CD8-positive, alpha-beta T cell (primary cell): ENCODE measurements at regions of chr11 and their contacts with region 1.

Region 1: GRCh38 chr11:104968355-104968855 is at the start of gene CASP4:
- DNase-seq: peak in 2 of 9 experiments; percentile 60 to 76
- ATAC-seq: peak; percentile 71
- H3K4me3 ChIP-seq: peak within 1 kb of the TSS; percentile 64 to 66
- H3K4me3 Mint-ChIP-seq: peak within 1 kb of the TSS; percentile 96
- H3K27ac ChIP-seq: peak within 1 kb of the TSS; percentile 71 to 83
- H3K27ac Mint-ChIP-seq: peak within 1 kb of the TSS; percentile 97
- H3K4me1 ChIP-seq: peaks cover 32% of the 10 kb centered on the region
- H3K4me1 Mint-ChIP-seq: peaks cover 40% of the 10 kb centered on the region
- H3K27me3 ChIP-seq: no peaks in the 10 kb centered on the region
- H3K27me3 Mint-ChIP-seq: no peaks in the 10 kb centered on the region
- CTCF ChIP-seq: no peak
- total RNA-seq, gene CASP4: 63.5 to 75.5 TPM

Region 2: DNA sequence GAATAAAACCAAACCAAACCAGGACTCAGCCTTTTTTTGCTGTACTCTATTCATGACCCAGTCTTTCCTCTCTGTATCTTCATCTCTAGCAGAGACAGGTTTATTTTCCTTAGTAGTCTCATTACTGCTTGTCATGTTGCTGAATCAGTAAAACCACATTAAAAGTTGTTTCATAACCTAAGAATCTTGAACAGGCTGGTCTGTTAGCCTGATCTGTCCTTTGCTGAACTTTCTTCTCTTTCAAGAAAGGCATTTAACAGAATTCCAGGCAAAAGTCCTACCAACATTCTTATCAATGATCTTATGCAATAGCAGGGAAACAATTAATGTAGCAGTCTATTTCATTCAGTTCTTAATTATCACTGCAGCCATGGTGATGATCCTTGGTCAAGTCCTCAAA is 267.8 kb before region 1 on chr11:
- CTCF ChIA-PET with region 1: no interaction called
- POLR2A ChIA-PET with region 1: no interaction called
- intact Hi-C with region 1: loop called in 1 of 2 experiments (anchors 5 kb)
- DNase-seq: peak in 2 of 9 experiments; percentile 8 to 40
- ATAC-seq: peak; percentile 60
- H3K4me3 ChIP-seq: no peak overlapping the region
- H3K4me3 Mint-ChIP-seq: no peak overlapping the region
- H3K27ac ChIP-seq: no peak overlapping the region
- H3K27ac Mint-ChIP-seq: peak overlapping the region; percentile 65
- H3K4me1 ChIP-seq: peaks cover 20% of the 10 kb centered on the region
- H3K4me1 Mint-ChIP-seq: peaks cover 34% of the 10 kb centered on the region
- H3K27me3 ChIP-seq: no peaks in the 10 kb centered on the region
- H3K27me3 Mint-ChIP-seq: no peaks in the 10 kb centered on the region
- CTCF ChIP-seq: no peak

Region 3: DNA sequence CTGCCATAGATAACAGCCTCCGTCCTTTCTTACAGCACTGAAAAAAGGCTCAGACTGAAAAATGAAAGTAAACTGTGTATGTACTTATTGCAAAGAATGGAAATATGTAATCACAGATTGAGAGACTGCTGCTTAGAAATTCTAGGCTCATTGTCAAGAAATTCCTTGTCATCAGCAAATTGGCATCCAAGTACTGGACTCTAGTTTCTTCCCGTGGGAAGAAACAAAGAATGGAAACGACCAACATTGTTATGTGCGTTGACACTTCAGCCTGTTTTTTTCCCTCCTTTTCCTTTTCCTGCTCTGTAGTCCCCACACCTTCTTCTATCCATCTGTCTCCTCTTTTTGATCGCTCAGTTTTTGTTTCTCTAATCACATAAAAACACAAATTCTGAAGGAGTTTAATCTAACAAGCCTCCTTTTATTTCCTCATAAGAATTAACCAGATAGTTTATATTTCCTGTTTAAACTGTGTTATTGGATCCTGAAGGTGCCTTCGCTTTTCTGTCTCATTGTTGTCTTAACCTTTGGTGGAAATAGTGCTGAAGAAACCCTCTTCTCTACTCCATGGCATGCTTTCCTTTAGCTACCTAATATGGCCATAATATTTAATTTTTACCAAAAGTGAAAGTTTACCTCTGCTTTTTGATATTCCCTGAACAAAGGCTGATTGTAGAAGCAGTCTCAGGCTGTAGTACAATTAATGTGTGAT is 50.1 kb before region 1 on chr11:
- CTCF ChIA-PET with region 1: interaction called, 3 read pairs
- POLR2A ChIA-PET with region 1: no interaction called
- intact Hi-C with region 1: loop called in 1 of 2 experiments (anchors 10 kb)
- DNase-seq: peak in 2 of 9 experiments; percentile 43 to 61
- ATAC-seq: peak; percentile 73
- H3K4me3 ChIP-seq: peak overlapping the region; percentile 53 to 64
- H3K4me3 Mint-ChIP-seq: peak overlapping the region; percentile 89
- H3K27ac ChIP-seq: peak overlapping the region; percentile 47 to 80
- H3K27ac Mint-ChIP-seq: peak overlapping the region; percentile 88
- H3K4me1 ChIP-seq: peaks cover 14% of the 10 kb centered on the region
- H3K4me1 Mint-ChIP-seq: peaks cover 54% of the 10 kb centered on the region
- H3K27me3 ChIP-seq: no peaks in the 10 kb centered on the region
- H3K27me3 Mint-ChIP-seq: no peaks in the 10 kb centered on the region
- CTCF ChIP-seq: no peak

Region 4: DNA sequence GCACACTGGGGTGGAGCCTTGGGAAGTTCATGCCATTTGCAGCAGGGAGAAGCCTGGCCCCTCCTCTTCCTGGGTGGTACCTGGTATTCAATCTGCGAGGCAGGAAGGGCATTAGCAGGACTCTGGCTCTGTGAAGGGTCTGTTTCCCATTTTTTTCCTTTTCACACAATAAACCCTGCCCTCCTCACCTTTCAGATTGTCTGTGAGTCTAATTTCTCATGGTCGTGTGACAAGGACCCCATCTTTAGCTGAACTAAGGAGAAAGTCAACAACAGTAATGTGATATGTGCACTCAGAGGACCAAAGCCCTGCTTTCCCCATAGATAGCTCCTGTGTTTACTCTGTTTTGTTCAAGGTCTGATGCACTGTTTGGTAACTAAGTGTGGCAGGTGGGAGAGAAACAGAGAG is 26.6 kb after region 1 on chr11:
- CTCF ChIA-PET with region 1: no interaction called
- POLR2A ChIA-PET with region 1: no interaction called
- intact Hi-C with region 1: no loop called
- DNase-seq: no peak
- ATAC-seq: no peak
- H3K4me3 ChIP-seq: no peak overlapping the region
- H3K4me3 Mint-ChIP-seq: no peak overlapping the region
- H3K27ac ChIP-seq: no peak overlapping the region
- H3K27ac Mint-ChIP-seq: no peak overlapping the region
- H3K4me1 ChIP-seq: no peaks in the 10 kb centered on the region
- H3K4me1 Mint-ChIP-seq: peaks cover 7% of the 10 kb centered on the region
- H3K27me3 ChIP-seq: no peaks in the 10 kb centered on the region
- H3K27me3 Mint-ChIP-seq: no peaks in the 10 kb centered on the region
- CTCF ChIP-seq: no peak

Region 5: DNA sequence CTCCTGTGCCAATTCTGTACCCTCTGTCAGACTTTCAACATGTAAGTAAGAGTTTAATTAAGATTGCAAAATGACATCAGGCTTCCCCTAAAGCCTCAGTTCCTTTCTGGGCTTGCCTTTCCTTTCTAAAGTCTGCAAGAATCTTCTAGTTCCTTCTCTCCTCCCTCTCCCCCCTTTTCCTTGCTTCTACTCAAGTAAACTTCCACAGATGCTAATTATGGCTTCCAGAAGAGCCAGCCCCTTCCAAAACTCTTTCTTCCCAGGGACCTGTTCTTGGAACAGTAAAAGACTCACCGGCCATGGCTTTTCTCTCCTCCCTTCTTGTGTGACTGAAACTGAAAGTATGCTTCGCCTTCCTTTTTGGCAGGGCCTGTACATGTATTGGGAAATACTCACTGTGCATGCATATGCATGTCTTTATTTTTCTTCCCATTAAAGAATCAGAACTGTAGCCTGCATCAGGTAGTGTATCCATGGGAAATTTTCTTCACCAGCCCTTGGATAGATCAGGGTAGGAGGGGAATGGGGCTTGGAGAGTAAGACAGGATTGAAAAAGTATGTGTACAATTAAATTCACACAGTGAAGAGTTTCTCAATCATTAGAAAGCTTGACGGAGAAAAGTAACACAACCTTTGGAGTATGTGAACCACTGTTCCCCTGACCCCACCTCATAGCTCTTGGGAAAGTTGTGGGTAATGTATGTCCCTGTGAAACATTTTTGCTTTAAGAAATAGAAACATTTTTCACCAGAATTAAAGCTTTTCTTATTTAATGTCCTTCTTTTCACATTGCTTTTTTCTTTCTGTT is 66.6 kb after region 1 on chr11 and contains the start of gene CASP1:
- CTCF ChIA-PET with region 1: no interaction called
- POLR2A ChIA-PET with region 1: interaction called, 3 read pairs
- intact Hi-C with region 1: loop called (anchors 5 kb)
- DNase-seq: peak in 7 of 9 experiments; percentile 10 to 70 (median 35)
- ATAC-seq: peak; percentile 75
- H3K4me3 ChIP-seq: peak within 1 kb of the TSS; percentile 64 to 66
- H3K4me3 Mint-ChIP-seq: peak within 1 kb of the TSS; percentile 92
- H3K27ac ChIP-seq: peak within 1 kb of the TSS; percentile 59 to 84
- H3K27ac Mint-ChIP-seq: peak within 1 kb of the TSS; percentile 93
- H3K4me1 ChIP-seq: peaks cover 28% of the 10 kb centered on the region
- H3K4me1 Mint-ChIP-seq: peaks cover 52% of the 10 kb centered on the region
- H3K27me3 ChIP-seq: no peaks in the 10 kb centered on the region
- H3K27me3 Mint-ChIP-seq: no peaks in the 10 kb centered on the region
- CTCF ChIP-seq: no peak
- total RNA-seq, gene CASP1: 11.3 to 15.9 TPM